ENCODE measurements at regions of chr1 and their contacts with region 1.

Region 1: GRCh38 chr1:39196244-39197215 is 8.0 kb upstream of the MACF1 start:
- DNase-seq: peak; percentile 37 to 87
- ATAC-seq: peak; percentile 64 to 91 (median 86)
- H3K4me3 ChIP-seq: no peak overlapping the region
- H3K4me3 Mint-ChIP-seq: peak overlapping the region; percentile 74
- H3K27ac ChIP-seq: peak overlapping the region; percentile 86
- H3K27ac Mint-ChIP-seq: peak overlapping the region; percentile 91 to 94
- H3K4me1 ChIP-seq: peaks cover 58% of the 10 kb centered on the region
- H3K4me1 Mint-ChIP-seq: peaks cover 61 to 71% of the 10 kb centered on the region in 2 donors
- H3K27me3 ChIP-seq: no peaks in the 10 kb centered on the region
- H3K27me3 Mint-ChIP-seq: no peaks in the 10 kb centered on the region
- CTCF ChIP-seq: no peak

Region 2: GRCh38 chr1:39282537-39283216 is 86.1 kb after region 1 on chr1:
- intact Hi-C with region 1: no loop called
- DNase-seq: no peak
- ATAC-seq: no peak
- H3K4me3 ChIP-seq: no peak overlapping the region
- H3K4me3 Mint-ChIP-seq: no peak overlapping the region
- H3K27ac ChIP-seq: no peak overlapping the region
- H3K27ac Mint-ChIP-seq: peak overlapping the region; percentile 52 to 55
- H3K4me1 ChIP-seq: no peaks in the 10 kb centered on the region
- H3K4me1 Mint-ChIP-seq: peaks cover 18 to 25% of the 10 kb centered on the region in 2 donors
- H3K27me3 ChIP-seq: no peaks in the 10 kb centered on the region
- H3K27me3 Mint-ChIP-seq: no peaks in the 10 kb centered on the region
- CTCF ChIP-seq: no peak

Region 3: DNA sequence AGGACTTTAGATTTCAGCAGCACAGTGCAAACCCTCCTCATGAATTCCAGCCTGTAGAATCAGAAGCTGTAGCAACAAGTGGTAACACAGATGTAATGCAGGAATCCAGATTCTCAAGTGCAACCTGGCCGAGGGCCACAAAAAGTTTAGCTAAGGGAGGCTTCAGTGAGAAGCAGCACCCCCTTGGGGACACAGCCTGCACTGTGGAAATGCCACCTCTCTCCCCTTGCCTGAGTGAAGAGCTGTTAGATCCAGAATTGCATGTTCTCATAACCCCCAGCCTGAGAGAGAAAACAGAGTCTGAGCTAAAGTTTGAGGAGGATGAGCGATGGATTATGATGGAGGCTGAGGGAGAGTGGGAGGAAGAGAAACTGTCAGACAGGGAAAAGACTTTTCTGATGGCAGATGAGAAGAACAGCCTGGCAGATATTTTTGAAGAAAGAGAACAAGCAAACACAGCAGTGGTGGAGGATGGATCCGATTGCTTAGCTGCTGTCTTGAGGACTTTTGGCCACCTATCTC is 214.4 kb after region 1 on chr1:
- intact Hi-C with region 1: loop called (anchors 10 kb)
- DNase-seq: peak in 1 of 2 donors; percentile 81
- ATAC-seq: peak in 1 of 3 donors; percentile 39
- H3K4me3 ChIP-seq: no peak overlapping the region
- H3K4me3 Mint-ChIP-seq: no peak overlapping the region
- H3K27ac ChIP-seq: no peak overlapping the region
- H3K27ac Mint-ChIP-seq: peak overlapping the region; percentile 25 to 61
- H3K4me1 ChIP-seq: peaks cover 11% of the 10 kb centered on the region
- H3K4me1 Mint-ChIP-seq: peaks cover 63 to 66% of the 10 kb centered on the region in 2 donors
- H3K27me3 ChIP-seq: no peaks in the 10 kb centered on the region
- H3K27me3 Mint-ChIP-seq: no peaks in the 10 kb centered on the region
- CTCF ChIP-seq: peak; percentile 35